ENCODE measurements at regions of chr10 and their contacts with region 1.

Region 1: DNA sequence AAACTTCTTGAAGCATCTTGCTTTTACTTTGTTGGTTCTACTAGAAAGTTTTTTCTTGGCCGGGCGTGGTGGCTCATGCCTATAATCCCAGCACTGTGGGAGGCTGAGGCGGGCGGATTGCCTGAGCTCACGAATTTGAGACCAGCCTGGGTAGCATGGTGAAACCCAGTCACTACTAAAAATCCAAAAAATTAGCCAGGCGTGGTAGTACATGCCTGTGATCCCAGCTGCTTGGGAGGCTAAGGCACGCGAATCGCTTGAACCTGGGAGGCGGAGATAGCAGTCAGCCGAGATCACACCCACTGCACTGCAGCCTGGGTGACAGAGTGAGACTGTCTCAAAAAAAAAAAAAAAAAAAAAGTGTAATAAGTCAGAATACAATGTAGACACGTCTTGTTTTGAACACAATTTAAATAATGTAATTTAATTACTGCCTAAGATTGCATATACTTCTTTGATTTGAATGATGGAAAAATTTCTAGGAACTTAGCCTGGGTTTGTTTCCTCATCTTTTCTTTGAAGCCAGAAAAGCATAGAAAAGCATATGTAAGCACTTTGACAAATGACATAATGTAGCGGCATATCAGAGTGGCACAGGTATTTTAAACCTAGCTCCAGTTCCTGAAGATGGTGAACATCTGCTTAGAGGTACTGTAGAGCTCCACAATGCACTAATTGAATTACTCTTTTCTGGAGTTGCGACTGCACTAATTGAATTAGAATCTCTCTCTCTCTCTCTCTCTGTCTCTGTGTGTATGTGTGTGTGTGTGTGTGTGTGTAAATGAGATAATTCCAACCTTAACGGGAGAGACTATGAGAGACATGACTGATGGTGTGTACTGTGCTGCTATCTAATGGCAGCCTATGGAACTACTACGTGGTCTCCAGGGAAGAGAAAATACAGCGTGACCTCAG is 87.8 kb downstream of the BTRC start:
- DNase-seq: peak; percentile 75
- H3K4me3 Mint-ChIP-seq: no peak overlapping the region
- H3K27ac Mint-ChIP-seq: no peak overlapping the region
- H3K4me1 Mint-ChIP-seq: peaks cover 6% of the 10 kb centered on the region
- H3K27me3 Mint-ChIP-seq: no peaks in the 10 kb centered on the region
- CTCF ChIP-seq: peak; percentile 66

Region 2: GRCh38 chr10:101222683-101223273 is 219.0 kb before region 1 on chr10:
- CTCF ChIA-PET with region 1: interaction called, 12 read pairs
- POLR2A ChIA-PET with region 1: interaction called, 5 read pairs
- intact Hi-C with region 1: no loop called
- DNase-seq: no peak
- H3K4me3 Mint-ChIP-seq: no peak overlapping the region
- H3K27ac Mint-ChIP-seq: no peak overlapping the region
- H3K4me1 Mint-ChIP-seq: peaks cover 18% of the 10 kb centered on the region
- H3K27me3 Mint-ChIP-seq: peaks cover 31% of the 10 kb centered on the region
- CTCF ChIP-seq: no peak

Region 3: DNA sequence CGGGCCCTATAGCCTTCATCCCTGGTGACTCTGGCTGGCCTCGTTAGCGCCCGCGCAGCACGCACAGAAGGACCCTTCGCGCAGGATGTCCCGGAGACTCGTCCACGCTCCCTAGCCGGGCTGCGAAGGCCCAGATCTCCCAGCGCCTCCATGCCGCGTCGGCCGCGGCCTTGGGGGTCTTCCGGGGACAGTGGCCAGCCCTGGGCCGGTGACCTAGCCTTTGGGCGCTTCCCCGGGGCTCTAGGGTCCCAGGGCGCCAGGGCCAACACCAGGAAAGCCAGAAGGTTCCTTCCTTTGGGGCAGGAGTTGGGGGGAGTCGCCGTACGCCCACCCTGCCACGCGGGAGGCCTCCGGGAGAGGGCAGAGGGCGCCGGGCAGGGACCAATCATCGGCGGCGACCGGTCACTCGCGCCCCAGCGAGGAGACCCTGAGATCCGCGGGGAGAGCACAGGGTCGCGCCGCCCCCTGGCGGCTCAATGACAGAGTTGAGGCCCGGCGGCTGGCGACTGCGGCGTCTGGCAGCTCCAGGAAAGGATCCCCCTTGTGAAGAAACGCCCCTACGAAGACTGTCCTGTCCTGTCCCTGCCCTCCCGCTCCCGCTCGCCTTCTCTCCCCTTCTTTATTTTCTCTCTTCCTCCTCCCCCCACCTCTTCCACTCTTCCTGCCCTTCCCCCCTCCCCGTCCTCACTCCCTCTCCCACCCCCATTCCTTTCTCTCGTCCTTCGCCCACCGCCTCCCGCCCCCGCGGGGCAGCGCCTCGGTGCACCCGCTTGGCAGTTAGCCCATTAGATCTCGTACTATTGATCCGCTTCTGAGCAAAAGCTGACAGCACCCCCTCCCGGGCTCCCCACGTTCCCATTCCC is 150.2 kb before region 1 on chr10:
- CTCF ChIA-PET with region 1: interaction called, 13 read pairs
- POLR2A ChIA-PET with region 1: no interaction called
- intact Hi-C with region 1: no loop called
- DNase-seq: peak; percentile 34
- H3K4me3 Mint-ChIP-seq: peak overlapping the region; percentile 71
- H3K27ac Mint-ChIP-seq: no peak overlapping the region
- H3K4me1 Mint-ChIP-seq: peaks cover 7% of the 10 kb centered on the region
- H3K27me3 Mint-ChIP-seq: peaks cover 39% of the 10 kb centered on the region
- CTCF ChIP-seq: peak; percentile 69

Region 4: DNA sequence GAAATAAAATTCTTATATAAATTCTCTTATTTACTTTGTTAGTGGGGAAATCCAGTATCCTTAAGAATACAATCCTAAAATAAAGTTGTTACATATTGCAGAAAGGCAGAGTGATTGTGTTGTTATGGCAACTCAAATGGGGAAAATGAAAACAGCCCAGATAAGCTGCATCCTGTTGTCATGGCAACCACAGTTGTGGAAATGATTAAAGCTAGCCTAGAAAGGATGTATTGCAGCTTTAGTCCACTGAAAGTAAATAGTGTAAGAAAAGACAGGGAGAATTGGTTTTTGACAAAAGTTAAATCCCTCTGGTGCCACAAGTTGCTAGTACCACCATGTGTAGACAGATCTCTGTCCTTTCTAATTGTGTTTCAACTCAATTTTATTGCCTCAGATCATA is 44.7 kb before region 1 on chr10:
- CTCF ChIA-PET with region 1: interaction called, 11 read pairs
- POLR2A ChIA-PET with region 1: interaction called, 3 read pairs
- intact Hi-C with region 1: no loop called
- DNase-seq: no peak
- H3K4me3 Mint-ChIP-seq: no peak overlapping the region
- H3K27ac Mint-ChIP-seq: no peak overlapping the region
- H3K4me1 Mint-ChIP-seq: peaks cover 6% of the 10 kb centered on the region
- H3K27me3 Mint-ChIP-seq: no peaks in the 10 kb centered on the region
- CTCF ChIP-seq: no peak

Region 5: DNA sequence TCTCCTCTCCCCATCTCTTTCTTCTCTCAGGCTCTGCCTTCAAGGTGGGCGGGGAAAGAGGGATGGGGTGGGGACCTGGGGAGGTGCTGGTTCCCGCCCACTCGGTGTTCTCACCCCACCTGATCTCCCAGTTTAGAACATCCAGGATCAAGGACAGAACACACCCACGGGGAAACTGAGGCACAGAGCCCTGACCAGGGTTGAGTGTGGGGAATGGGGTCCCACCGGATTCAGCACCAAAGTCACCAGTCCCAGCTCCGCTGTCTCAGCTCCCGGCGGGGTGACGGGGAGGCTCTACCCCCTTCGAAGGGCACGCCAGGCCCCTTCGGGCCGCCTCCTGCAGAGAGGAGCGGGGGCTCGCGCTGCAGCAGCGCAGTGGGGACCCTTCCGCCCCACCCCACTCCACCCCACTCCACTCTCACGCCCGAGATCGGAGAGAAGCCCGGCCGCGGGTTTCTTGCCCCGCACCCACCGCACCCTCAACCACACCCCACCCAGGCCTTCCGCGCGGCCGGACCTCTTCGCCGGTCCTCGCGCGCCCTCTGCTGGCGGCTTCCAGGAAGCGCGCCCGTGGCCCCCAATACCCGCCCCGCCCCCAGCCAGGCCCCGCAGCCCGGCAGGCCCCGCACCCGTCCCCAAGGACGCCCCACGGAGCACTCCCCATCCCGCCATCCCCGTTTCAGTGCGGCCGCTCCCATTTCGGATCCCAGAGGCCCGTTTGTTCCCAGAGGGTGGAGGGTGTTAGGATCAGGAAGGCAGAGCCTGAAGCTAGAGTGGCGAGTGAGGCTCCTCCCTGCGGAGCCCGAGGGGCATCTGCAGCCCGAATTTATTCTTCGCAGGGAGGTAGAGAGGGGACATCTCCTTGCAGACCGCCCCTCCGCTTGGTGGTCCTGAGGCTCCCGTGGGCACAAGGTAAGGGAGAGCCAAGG is 128.3 kb after region 1 on chr10:
- CTCF ChIA-PET with region 1: interaction called, 15 read pairs
- POLR2A ChIA-PET with region 1: interaction called, 3 read pairs
- intact Hi-C with region 1: loop called (anchors 2 kb)
- DNase-seq: peak; percentile 69
- H3K4me3 Mint-ChIP-seq: peak overlapping the region; percentile 72
- H3K27ac Mint-ChIP-seq: no peak overlapping the region
- H3K4me1 Mint-ChIP-seq: peaks cover 5% of the 10 kb centered on the region
- H3K27me3 Mint-ChIP-seq: peaks cover 16% of the 10 kb centered on the region
- CTCF ChIP-seq: peak; percentile 94

Measured in MCF 10A (cell line).